Body of pancreas (tissue), 4 donors: ENCODE measurements at regions of chr3 and their contacts with region 1.

Region 1: DNA sequence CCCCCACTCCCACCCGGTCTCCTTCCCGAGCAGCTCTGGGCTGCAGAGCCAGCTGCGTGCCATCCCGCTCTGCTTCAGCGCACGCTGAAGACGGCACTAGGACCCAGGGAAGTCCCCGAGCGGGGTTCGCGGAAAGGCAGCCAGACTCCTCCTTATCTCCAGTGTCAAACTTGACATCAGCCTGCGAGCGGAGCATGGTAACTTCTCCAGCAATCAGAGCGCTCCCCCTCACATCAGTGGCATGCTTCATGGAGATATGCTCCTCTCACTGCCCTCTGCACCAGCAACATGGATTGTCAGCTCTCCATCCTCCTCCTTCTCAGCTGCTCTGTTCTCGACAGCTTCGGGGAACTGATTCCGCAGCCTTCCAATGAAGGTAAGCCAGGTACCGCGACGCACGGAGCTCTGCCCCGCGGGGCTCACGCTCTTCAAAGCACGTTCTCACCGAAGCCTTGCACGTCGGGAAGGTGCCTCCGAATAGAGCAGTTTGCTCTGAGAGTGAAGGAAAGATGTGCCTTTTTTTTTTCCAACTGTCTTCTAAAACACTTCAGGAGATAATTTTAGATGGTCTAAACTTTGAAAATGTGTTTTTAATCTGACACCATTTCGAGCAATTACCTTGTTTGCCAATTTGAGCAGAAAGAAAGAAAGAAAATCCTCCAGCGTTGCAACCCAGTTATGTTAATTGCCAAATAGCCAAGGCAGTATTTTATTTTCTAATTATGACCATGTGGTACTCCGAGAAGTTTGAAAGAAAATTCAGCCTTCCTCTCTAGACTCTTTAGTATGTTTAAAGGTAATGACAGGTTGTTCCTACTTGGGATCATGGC is at the start of gene EPHA3:
- DNase-seq: peak; percentile 46 to 73 (median 51)
- ATAC-seq: peak; percentile 80
- H3K4me3 ChIP-seq: no peak within 1 kb of the TSS
- H3K27ac ChIP-seq: no peak within 1 kb of the TSS
- H3K4me1 ChIP-seq: peaks cover 8% of the 10 kb centered on the region
- H3K27me3 ChIP-seq: peaks cover 0 to 16% of the 10 kb centered on the region in 2 donors
- CTCF ChIP-seq: no peak
- POLR2A ChIP-seq: peak in 1 of 3 donors; percentile 13
- total RNA-seq, gene EPHA3: 1.3 to 6.0 TPM

Region 2: GRCh38 chr3:88225326-88226008 is 882.2 kb before region 1 on chr3:
- intact Hi-C with region 1: loop called (anchors 10 kb)
- DNase-seq: no peak
- ATAC-seq: no peak
- H3K4me3 ChIP-seq: no peak overlapping the region
- H3K27ac ChIP-seq: no peak overlapping the region
- H3K4me1 ChIP-seq: no peaks in the 10 kb centered on the region
- H3K27me3 ChIP-seq: no peaks in the 10 kb centered on the region
- CTCF ChIP-seq: no peak
- POLR2A ChIP-seq: no peak

Region 3: DNA sequence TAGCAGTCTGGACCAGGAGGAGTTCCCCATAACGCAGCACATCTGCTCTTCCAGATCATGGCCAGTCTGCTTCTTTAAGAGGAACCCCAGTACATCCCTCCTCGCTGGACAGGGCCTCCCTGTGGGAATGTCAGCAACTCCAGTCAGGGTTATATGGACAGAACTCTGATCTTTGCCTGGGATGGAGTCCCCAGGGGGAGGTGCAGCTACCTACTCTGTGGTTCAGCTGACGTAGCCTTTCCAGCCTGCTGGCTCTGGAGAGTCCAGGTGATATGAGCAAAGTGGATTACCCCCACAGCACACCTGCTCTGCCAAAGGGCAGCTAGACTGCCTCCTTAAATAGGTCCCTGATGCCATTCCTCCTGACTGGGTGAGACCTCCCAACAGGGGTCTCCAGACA is 417.4 kb before region 1 on chr3:
- intact Hi-C with region 1: no loop called
- DNase-seq: no peak
- ATAC-seq: no peak
- H3K4me3 ChIP-seq: no peak overlapping the region
- H3K27ac ChIP-seq: no peak overlapping the region
- H3K4me1 ChIP-seq: no peaks in the 10 kb centered on the region
- H3K27me3 ChIP-seq: no peaks in the 10 kb centered on the region
- CTCF ChIP-seq: no peak
- POLR2A ChIP-seq: no peak